SK-N-SH (cell line): ENCODE measurements at regions of chr1 and their contacts with region 1.

Region 1: GRCh38 chr1:203133970-203134725 is 6.6 kb downstream of the ADORA1 start:
- DNase-seq: no peak
- H3K4me3 ChIP-seq: no peak overlapping the region
- H3K27ac ChIP-seq: no peak overlapping the region
- H3K4me1 ChIP-seq: peaks cover 5 to 38% of the 10 kb centered on the region in 2 experiments; a peak in 2 of 4 replicates
- H3K27me3 ChIP-seq: no peaks in the 10 kb centered on the region
- CTCF ChIP-seq: no peak
- EP300 ChIP-seq: no peak
- RAD21 ChIP-seq: no peak

Region 2: GRCh38 chr1:203148125-203148524 is 14.0 kb after region 1 on chr1:
- CTCF ChIA-PET with region 1: interaction called, 19 read pairs
- POLR2A ChIA-PET with region 1: no interaction called
- DNase-seq: no peak
- H3K4me3 ChIP-seq: no peak overlapping the region
- H3K27ac ChIP-seq: no peak overlapping the region
- H3K4me1 ChIP-seq: peaks cover 18 to 48% of the 10 kb centered on the region in 2 experiments; a peak in 3 of 4 replicates
- H3K27me3 ChIP-seq: no peaks in the 10 kb centered on the region
- CTCF ChIP-seq: peak; percentile 51
- EP300 ChIP-seq: no peak
- RAD21 ChIP-seq: no peak

Region 3: GRCh38 chr1:203162403-203162802 is 28.3 kb after region 1 on chr1:
- CTCF ChIA-PET with region 1: no interaction called
- POLR2A ChIA-PET with region 1: no interaction called
- DNase-seq: no peak
- H3K4me3 ChIP-seq: no peak overlapping the region
- H3K27ac ChIP-seq: no peak overlapping the region
- H3K4me1 ChIP-seq: no peaks in the 10 kb centered on the region
- H3K27me3 ChIP-seq: no peaks in the 10 kb centered on the region
- CTCF ChIP-seq: no peak
- EP300 ChIP-seq: no peak
- RAD21 ChIP-seq: no peak

Region 4: DNA sequence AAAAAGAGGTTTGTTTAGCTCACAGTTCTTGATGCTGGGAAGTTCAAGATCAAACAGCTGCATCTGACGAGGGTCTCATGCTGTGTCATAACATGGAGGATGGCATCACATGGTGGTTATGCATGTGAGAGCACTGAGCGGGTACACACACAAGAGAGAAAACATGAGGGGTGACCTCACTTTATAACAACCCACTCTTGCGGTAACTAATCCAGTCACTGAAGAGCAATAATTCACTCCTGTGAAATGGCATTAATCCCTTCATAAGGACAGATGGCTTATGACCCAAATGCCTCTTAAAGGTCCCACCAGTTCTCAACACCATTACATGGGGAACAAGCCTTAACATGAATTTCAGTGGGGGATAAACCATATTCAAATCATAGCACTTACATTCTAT is 118.5 kb after region 1 on chr1:
- CTCF ChIA-PET with region 1: no interaction called
- POLR2A ChIA-PET with region 1: no interaction called
- DNase-seq: no peak
- H3K4me3 ChIP-seq: no peak overlapping the region
- H3K27ac ChIP-seq: no peak overlapping the region
- H3K4me1 ChIP-seq: no peaks in the 10 kb centered on the region
- H3K27me3 ChIP-seq: no peaks in the 10 kb centered on the region
- CTCF ChIP-seq: no peak
- EP300 ChIP-seq: no peak
- RAD21 ChIP-seq: no peak